OCI-LY7 (cell line): ENCODE measurements at regions of chr6 and their contacts with region 1.

Region 1: DNA sequence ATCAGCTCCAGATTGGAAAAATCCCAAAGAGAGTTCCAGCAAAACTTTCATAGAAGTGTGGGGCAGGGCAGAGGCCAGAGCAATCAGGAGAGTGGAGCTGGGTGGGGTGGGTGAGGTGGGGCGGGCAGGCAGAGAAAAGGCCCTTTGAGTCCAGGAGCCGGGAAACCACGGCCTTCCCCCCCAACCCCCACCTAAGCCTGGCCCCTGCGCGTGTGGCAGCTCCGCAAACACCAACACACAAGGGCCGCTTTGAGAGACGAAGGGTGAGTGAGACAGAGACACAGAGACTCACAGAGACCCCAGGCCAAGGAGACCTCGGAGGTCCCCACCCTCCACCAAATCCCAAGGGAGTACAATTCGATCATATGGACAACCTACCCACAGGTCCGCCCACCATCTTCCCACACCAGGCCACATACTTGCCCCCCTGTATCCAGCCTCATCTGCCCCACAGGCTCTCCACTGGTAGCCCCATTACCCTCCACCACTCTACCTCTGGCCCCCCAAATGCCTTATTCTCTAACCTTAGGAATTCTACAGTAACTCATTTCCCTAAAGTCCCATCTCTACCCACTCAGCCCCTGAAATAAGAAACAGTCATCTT is 1.7 kb downstream of the COL11A2 start:
- DNase-seq: no peak
- H3K4me3 ChIP-seq: no peak overlapping the region
- H3K27ac ChIP-seq: no peak overlapping the region
- H3K4me1 ChIP-seq: no peaks in the 10 kb centered on the region
- CTCF ChIP-seq: no peak

Region 2: GRCh38 chr6:33029328-33030184 is 161.1 kb before region 1 on chr6:
- CTCF ChIA-PET with region 1: no interaction called
- POLR2A ChIA-PET with region 1: no interaction called
- intact Hi-C with region 1: no loop called
- DNase-seq: peak; percentile 89
- H3K4me3 ChIP-seq: peak overlapping the region; percentile 52
- H3K27ac ChIP-seq: peak overlapping the region; percentile 84
- H3K4me1 ChIP-seq: peaks cover 49% of the 10 kb centered on the region
- CTCF ChIP-seq: no peak

Region 3: DNA sequence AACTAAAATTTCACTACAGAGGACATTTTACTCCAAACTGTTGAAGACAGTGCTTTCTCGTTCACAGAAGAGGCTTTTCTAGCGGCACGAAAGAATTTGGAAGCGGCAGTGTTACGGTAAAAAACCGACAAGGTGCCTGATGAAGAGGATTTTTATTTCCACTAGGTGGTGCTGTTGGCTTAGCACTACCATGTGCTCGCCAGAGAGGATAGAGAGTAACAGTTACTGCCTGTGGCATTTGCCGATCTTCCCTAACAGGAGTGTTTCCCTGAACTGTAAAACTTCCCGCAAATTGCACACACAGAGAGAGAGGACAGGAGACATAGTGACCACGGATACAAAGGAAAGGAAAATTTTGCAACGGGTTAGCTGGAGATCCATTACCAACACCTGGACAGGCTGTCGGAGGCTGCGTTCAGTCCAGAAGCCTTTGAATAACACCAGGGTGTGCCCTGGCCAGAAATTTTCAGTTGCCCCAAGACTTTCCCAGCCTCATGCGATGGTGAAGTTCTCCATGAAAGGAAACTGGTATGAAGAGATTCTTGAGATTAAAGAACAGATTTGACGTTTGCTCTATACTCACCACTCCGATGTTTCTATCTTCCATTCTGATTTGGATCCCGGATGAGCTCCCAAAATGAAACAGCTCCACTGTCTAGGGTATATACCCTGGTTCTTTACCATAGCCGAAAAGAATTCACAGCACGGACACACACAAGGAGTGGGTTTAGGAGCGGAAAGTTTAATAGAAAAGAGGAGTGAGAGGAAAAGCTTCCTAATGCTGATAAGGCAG is 66.7 kb before region 1 on chr6:
- CTCF ChIA-PET with region 1: interaction called, 10 read pairs
- POLR2A ChIA-PET with region 1: no interaction called
- intact Hi-C with region 1: no loop called
- DNase-seq: peak; percentile 67
- H3K4me3 ChIP-seq: no peak overlapping the region
- H3K27ac ChIP-seq: no peak overlapping the region
- H3K4me1 ChIP-seq: no peaks in the 10 kb centered on the region
- CTCF ChIP-seq: peak; percentile 88